HEK293 (cell line): ENCODE measurements at regions of chr19 and their contacts with region 1.

Region 1: DNA sequence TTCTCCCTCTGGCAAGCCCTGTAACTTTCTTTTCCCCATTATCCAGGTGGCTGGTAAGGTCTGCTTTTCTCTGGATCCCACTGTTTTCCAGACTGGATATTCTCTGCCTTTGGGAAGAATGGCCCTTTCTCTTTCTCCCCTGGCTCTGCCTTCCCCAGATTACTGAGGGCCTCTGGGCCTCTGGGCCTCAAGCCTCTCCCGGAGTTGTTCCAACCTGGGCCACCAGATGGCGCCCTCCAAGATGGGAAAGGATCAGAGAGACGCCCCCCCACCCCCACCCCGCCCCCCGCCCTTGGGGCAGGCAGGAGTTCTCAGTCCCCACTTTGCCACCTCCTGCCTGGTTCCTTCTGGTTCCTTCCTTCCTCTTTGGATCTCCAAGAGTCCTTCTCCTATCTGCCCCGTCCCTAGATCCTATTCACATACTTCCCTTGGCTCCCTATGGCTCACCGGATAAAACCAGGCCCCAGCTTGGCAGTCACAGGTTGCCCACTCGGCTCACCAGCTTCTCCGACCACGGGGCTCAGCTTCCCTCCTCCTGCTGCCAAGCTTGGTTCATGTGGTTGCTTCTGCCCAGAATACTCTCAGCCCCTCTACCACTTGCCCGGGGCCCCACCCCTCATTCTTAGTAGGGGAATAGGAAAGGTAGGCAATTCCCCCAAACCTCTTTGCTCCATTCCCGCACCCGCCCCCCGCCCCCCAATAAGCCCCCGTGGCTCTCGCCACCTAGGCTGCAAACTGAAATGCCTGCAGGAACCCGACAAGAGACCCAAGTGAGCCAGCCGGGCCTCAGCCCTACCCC is 13.1 kb downstream of the EPS8L1 start:
- H3K4me3 ChIP-seq: no peak overlapping the region
- H3K27ac ChIP-seq: no peak overlapping the region
- H3K4me1 ChIP-seq: no peaks in the 10 kb centered on the region
- CTCF ChIP-seq: no peak

Region 2: GRCh38 chr19:55068950-55069855 is 19.5 kb before region 1 on chr19:
- CTCF ChIA-PET with region 1: interaction called, 13 read pairs
- POLR2A ChIA-PET with region 1: interaction called, 3 read pairs
- H3K4me3 ChIP-seq: peak overlapping the region; percentile 43
- H3K27ac ChIP-seq: no peak overlapping the region
- H3K4me1 ChIP-seq: peaks cover 4% of the 10 kb centered on the region; the same call in 1 of the 2 replicates
- CTCF ChIP-seq: no peak

Region 3: DNA sequence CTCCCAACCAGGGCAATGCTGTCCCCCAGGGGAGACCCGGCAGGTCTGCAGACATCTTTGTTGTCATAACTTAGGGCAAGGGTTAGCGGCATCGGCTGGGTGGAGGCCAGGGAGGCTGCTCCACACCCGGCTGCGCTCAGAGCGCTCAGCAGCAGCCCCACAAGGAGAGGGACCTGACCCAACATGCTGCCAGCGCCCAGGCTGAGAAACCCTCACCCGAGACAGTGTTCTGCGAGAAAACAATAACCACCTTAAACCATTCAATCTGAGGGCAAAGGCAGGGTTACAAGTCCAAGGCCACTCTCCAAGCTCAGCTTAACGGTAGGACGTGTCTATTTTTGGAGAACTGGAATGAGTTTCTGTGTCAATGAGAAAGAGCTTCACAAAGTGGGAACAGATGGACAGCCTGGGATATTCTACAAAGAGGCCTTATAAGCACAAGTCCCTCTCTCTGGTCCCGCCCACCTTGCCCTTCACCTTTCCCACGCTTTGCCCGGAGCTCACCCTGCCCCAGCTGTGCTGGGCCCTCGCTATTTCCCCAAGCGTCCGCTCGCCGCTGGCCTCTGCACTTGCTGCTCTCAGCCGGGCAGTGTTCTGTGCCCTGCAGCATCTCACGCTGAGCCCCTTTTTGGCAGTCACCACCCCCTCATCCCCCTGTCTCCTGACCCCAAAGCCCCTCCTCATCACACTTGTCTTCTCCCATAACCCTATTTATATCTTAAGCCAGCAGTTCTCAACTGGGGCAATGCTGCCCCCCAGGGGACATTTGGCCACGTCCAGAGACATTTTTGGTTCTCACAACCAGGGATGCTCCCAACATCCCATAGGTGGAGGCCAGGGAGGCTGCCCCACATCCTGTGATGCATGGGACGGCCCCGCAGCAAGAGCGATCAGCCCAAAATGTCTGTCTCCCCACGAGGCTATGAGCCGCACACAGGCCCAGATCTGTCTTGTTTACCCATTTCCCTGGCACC is 11.1 kb after region 1 on chr19:
- CTCF ChIA-PET with region 1: interaction called, 35 read pairs
- POLR2A ChIA-PET with region 1: no interaction called
- H3K4me3 ChIP-seq: no peak overlapping the region
- H3K27ac ChIP-seq: no peak overlapping the region
- H3K4me1 ChIP-seq: no peaks in the 10 kb centered on the region
- CTCF ChIP-seq: no peak

Region 4: GRCh38 chr19:55106591-55106990 is 17.8 kb after region 1 on chr19:
- CTCF ChIA-PET with region 1: interaction called, 35 read pairs
- POLR2A ChIA-PET with region 1: no interaction called
- H3K4me3 ChIP-seq: no peak overlapping the region
- H3K27ac ChIP-seq: no peak overlapping the region
- H3K4me1 ChIP-seq: no peaks in the 10 kb centered on the region
- CTCF ChIP-seq: no peak

Region 5: GRCh38 chr19:55117636-55118391 is 29.1 kb after region 1 on chr19 and contains the start of gene PPP1R12C:
- CTCF ChIA-PET with region 1: interaction called, 26 read pairs
- POLR2A ChIA-PET with region 1: interaction called, 13 read pairs
- H3K4me3 ChIP-seq: peak within 1 kb of the TSS; percentile 78
- H3K27ac ChIP-seq: peak within 1 kb of the TSS; percentile 78; the same call in 1 of the 2 replicates
- H3K4me1 ChIP-seq: peaks cover 18% of the 10 kb centered on the region
- CTCF ChIP-seq: 0 out of 2 replicates have a peak, but pooled peaks have one; percentile 29

Region 6: DNA sequence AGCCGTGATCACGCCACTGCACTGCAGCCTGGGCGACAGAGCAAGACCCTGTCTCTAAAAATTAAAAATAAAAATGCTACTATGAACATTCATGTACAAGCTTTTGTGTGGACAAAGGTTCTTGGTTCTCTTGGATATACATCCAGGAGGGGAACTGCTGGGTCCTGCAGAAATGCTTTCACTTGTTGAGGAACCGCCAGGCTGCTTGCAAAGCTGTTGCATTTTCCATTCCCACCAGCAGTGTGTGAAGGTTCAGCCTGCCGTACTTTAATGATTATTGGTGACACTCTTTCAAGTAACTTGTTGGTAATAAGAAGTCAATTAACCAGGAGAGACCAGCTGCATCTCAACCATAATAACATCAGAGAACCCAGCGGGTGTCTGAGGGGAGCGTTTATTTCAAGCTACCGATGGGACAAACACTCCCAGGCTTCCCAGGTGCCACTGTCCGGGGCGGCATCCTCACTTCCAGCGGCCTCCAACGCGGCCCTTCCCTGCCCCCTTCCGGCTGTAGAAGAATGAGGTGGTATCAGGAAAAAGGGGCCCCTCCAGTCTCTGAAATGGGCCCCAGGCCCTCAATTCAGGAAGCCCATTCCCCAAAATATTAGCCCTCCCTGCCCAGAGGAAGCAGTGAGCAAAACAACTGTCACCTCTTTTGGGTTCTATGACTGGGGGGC is 43.8 kb after region 1 on chr19:
- CTCF ChIA-PET with region 1: interaction called, 12 read pairs
- POLR2A ChIA-PET with region 1: interaction called, 4 read pairs
- H3K4me3 ChIP-seq: no peak overlapping the region
- H3K27ac ChIP-seq: no peak overlapping the region
- H3K4me1 ChIP-seq: no peaks in the 10 kb centered on the region
- CTCF ChIP-seq: no peak

Region 7: DNA sequence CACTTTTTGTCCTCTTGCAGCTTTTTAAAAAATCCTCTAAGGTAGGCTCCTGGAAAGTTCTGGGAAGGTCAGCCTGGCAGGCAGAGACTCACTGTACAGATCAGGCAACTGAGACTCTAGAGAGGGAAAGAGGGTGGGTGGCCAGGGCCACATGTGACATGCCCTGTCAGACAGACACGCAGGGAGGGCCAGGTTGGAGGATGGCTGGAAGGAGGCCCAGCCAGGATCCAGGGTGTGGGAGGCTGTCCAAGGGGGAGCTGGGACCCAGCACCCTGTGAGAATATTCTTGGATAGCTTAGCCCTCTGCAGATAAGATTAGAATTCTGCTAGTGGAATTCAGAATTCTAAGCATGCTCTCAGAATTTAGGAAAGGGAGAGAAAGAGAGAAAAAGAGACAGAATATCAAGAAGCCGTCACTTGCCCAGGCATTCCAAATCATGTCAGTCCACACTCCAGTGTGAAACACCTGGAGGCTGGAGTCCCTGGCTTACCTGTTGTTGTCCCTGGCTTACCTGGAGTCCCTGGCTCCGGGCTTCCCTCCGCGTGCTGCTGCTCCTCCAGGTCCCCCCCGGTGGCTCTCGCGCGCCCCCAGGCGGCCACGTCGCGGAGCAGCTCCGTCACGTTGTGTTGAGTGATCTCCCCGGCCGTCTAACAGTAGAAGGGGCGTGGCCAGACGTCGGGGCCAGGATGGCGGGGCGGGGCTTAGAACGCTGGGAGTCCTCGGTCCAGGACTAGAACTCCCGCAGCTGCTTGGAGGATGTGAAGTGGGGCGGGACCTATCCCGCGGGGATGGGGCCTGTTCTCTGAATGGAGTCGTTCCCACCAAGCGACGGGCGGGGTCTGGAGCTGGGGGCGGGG is 71.6 kb after region 1 on chr19:
- CTCF ChIA-PET with region 1: interaction called, 16 read pairs
- POLR2A ChIA-PET with region 1: no interaction called
- H3K4me3 ChIP-seq: no peak overlapping the region
- H3K27ac ChIP-seq: 0 out of 2 replicates have a peak overlapping the region, but pooled peaks have one; percentile 10
- H3K4me1 ChIP-seq: peaks cover 6% of the 10 kb centered on the region
- CTCF ChIP-seq: peak; percentile 94